Tibial artery (tissue), 4 donors: ENCODE measurements at regions of chr3 and their contacts with region 1.

Region 1: DNA sequence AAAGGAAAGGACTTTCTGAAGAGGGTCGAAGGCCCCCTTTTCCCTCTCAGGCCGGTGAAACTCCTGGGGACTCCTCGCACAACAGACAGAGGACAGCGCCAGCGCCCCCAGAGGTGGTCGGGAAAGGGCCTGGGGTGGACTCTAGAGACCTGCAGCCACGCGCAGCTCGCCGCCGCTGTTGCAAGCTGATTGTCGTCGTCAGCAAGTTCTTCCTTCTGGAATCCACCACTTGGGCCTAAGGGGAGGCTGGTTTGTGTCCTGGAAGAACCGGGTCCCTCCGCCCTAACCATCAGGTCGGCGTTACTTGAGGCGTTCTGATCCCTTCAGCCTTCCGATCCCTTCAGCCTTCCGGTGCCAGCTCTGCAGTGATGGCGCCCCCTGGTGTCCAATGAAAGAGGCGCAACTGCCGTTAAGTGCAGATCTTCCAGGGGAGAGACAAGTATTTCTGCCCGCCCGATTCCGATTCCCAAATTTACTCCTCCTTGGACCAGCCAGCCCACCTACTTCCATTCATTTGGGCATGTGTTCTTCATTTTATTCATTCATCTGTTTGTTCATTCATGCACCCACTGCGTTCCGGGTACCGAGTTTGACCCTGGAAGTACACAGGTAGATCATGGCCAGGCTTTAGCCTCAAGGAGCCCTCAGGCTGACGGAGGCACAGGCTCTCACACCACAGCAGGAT is 77.2 kb upstream of the SLC6A11 start:
- DNase-seq: peak; percentile 67 to 80
- H3K4me3 ChIP-seq: peak overlapping the region in 1 of 2 donors; percentile 16
- H3K27ac ChIP-seq: no peak overlapping the region
- H3K4me1 ChIP-seq: peaks cover 0 to 7% (median 2%) of the 10 kb centered on the region in 4 donors
- H3K27me3 ChIP-seq: peaks cover 0 to 46% of the 10 kb centered on the region in 2 donors
- CTCF ChIP-seq: peak; percentile 76 to 86

Region 2: DNA sequence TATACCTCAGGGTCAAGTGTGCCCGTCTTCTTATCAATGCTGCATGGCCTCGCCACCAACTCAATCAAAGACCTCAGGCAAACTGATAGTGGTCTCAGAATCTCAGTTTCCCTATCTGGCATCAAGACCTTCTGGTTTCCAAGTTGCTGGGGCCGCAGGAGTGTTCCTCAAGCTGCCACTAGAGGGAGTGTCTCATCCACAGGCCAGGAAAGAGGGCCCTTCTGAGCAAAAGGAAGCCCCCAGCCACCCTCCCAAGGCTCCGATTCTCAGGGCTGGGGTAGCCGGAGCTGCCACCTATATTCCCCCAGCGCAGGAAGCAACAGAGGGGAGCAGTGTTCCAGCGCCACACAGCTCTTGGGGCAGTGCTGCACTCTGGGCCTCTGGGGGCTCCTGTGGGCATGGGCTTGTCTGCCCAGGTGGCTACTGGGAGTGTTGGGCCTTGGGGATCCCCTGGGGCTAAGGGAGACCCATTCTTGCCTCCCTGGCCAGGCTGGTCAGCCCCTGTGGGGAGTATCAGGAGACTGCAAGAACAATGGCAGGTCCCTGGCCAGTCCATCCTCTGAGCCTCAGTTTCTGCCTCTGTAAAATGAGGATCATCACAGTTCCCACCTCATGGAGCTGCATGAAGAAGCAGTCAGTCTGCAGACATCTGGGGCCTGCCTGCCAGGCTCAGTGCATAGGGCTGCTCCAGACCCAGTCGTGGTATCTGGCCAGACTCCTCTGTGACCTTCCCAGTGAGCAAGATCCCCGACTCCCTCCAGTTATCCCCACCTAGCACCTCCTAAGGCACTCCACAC is 394.5 kb before region 1 on chr3:
- intact Hi-C with region 1: loop called (anchors 5 kb)
- DNase-seq: no peak
- H3K4me3 ChIP-seq: no peak overlapping the region
- H3K27ac ChIP-seq: no peak overlapping the region
- H3K4me1 ChIP-seq: no peaks in the 10 kb centered on the region
- H3K27me3 ChIP-seq: peaks cover 0 to 12% of the 10 kb centered on the region in 2 donors
- CTCF ChIP-seq: peak; percentile 67 to 88